IMR-90 (cell line): ENCODE measurements at regions of chrX and their contacts with region 1.

Region 1: DNA sequence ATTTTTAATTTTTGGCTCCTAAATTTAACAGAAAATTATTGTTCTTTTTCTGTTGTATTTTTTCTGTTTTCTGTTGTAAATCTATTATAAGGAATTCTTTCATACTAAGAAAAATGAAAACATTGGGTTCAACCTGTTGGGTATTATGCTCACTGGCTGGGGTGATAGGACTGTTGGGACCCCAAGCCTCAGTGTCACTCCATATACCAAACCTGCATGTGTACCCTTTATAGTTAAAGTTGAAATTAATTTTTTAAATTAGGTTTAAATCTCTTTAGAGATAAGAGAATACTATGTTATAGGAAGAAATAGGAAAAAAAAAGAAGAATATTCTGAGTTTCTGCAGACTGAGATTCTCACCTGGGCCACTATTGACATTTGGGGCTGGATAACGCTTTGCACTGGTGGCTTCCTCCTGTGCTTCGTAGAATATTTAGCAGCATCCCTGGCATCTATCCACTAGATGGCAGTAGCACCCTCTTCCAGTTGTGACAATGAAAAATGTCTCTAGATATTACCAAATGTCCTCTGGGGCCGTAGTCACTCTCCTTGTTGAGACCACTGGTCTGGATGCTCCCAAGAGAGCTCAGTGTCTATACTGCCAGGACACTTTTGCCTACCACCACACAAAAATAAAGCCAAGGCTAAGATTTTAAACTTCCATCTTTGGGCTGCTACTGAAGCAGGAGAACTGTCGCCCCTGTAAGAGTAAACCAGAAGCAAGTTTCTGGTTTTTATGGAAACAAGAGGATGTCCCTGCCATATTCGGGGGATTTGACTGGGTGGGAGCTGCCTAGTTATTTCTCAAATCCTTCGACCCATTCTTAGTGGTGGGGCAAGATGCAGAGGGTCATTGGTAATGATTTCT is 22.4 kb upstream of the CLTRN start:
- DNase-seq: peak; percentile 61
- ATAC-seq: peak; percentile 91
- H3K4me3 ChIP-seq: no peak overlapping the region
- H3K27ac ChIP-seq: no peak overlapping the region
- H3K4me1 ChIP-seq: no peaks in the 10 kb centered on the region
- H3K27me3 ChIP-seq: no peaks in the 10 kb centered on the region
- CTCF ChIP-seq: peak; percentile 83
- POLR2A ChIP-seq: no peak
- RAD21 ChIP-seq: peak; percentile 67

Region 2: DNA sequence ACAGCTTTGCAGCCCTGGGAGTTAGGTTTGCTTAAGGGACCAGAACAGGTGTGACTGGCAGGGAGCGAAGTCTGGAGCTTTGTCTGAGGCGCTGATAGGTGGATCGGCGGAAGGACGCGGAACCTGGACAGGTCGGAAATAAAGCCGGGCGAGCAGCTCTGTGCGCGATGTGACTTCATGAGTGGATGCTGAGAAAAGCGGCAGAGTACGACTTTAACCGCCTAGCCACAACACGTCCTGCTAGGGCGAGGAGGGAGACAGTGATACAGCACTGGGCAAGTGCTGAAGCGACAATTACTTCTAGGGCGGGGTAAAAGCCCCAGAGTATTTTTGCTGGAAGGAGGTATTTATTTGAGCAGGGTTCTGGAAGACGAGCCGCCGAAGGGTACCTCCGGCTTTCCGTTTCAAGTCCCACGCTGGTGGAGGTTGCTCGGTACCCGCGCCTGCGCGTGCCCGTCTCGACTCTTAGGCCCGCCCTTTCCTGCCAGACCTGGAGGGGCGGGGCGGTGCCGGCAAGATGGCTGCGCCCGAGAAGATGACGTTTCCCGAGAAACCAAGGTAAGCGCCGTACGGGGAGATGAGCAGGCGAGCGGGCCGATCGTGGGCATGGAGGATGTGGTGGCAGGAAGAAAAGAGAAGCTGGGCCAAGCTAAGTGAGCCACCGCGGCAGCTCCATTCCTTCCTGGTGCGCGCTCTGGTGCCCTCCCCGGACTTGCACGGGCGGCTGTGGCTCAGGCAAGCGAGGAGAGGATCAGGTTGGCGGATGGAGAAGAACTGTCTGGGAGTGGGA is 103.1 kb after region 1 on chrX and contains the start of gene ZRSR2:
- CTCF ChIA-PET with region 1: no interaction called
- POLR2A ChIA-PET with region 1: no interaction called
- dilution Hi-C with region 1: no loop called
- in situ Hi-C with region 1: no loop called
- intact Hi-C with region 1: loop called (anchors 2 kb)
- DNase-seq: peak; percentile 78
- ATAC-seq: peak; percentile 99
- H3K4me3 ChIP-seq: peak within 1 kb of the TSS; percentile 77
- H3K27ac ChIP-seq: peak within 1 kb of the TSS; percentile 61
- H3K4me1 ChIP-seq: no peaks in the 10 kb centered on the region; the same call in 1 of the 2 replicates
- H3K27me3 ChIP-seq: no peaks in the 10 kb centered on the region
- CTCF ChIP-seq: no peak
- POLR2A ChIP-seq: peak; percentile 41; the same call in 1 of the 2 replicates
- RAD21 ChIP-seq: no peak
- total RNA-seq, gene ZRSR2: 4.7 and 6.9 TPM in 2 replicates

Region 3: DNA sequence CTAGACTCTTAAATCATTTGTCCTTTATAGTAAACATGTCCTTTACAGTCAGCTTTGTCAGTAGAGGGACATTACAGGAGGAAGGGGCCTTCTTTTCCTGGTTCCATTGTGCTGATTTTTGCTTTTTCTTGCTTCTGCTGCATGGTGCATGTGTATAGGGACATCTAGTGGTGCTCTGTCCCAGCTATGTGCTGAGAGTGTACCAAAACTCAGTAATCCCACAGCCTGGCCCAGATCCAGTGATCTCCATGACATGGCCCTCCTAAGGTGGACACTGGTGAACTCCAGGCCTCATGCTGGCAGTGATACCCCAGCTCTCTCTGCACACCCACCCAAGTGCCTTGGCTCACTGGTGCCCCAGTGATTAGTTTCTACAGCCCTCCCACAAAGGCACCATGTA is 525.4 kb after region 1 on chrX:
- CTCF ChIA-PET with region 1: no interaction called
- POLR2A ChIA-PET with region 1: no interaction called
- dilution Hi-C with region 1: no loop called
- in situ Hi-C with region 1: no loop called
- intact Hi-C with region 1: loop called (anchors 10 kb)
- DNase-seq: peak; percentile 34
- ATAC-seq: peak; percentile 69; the same call in 1 of the 2 replicates
- H3K4me3 ChIP-seq: no peak overlapping the region
- H3K27ac ChIP-seq: no peak overlapping the region
- H3K4me1 ChIP-seq: no peaks in the 10 kb centered on the region
- H3K27me3 ChIP-seq: no peaks in the 10 kb centered on the region
- CTCF ChIP-seq: peak; percentile 43
- POLR2A ChIP-seq: no peak
- RAD21 ChIP-seq: peak; percentile 59

Region 4: DNA sequence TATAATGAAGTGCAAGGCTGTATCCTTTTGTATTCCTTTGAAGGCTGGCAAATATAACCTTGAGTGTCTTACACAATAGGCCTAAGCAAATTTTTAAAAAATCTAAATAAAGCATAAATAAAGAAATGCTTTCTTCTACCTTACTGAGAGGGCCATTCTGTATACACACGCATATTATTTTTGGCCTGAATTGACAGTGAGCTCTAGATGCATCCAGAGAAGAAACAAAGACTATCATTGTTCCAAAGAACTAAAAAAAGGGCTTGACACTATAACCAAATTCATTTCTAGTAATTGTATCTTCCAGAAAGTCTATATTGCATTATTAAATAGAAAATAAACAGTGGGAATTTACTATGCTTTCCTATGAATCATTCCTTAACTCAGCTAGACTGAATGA is 580.4 kb after region 1 on chrX:
- CTCF ChIA-PET with region 1: no interaction called
- POLR2A ChIA-PET with region 1: no interaction called
- dilution Hi-C with region 1: no loop called
- in situ Hi-C with region 1: no loop called
- intact Hi-C with region 1: no loop called
- DNase-seq: no peak
- ATAC-seq: no peak
- H3K4me3 ChIP-seq: no peak overlapping the region
- H3K27ac ChIP-seq: no peak overlapping the region
- H3K4me1 ChIP-seq: no peaks in the 10 kb centered on the region
- H3K27me3 ChIP-seq: no peaks in the 10 kb centered on the region
- CTCF ChIP-seq: no peak
- POLR2A ChIP-seq: no peak
- RAD21 ChIP-seq: no peak